ENCODE measurements at regions of chr21 and their contacts with region 1.

Region 1: DNA sequence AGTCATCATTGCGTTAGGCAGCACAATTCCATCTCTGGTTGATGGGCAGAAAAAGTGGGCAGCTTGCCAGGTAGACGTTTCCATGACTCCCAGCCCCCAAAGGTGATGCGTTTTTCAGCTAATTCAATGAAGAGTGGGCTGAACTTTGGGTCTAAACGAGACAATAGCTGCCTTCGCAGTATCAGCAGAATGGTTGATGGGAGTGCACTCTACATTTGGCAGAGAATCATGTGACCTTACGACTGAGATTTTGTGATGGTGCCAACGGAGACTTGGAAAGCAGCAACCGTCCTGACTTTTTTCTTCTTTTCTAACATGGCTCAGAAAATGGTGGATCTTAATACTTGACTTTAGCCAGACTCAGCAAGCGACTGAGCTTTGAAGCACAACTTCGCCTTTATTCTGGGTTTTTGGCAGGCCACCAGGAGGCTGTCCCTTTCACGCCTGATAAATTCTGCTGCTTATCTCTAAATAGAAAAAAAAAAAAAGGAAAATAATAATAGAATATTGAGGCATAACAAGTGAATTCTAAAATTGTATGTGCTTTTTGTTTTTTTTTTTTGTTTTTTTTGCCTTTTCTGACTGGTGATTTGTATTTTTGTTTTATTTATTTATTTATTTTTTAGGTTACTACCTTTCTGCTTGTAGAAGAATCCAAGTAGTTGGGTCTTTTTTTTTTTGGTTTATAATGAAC is 804.8 kb downstream of the USP25 start:
- DNase-seq: peak; percentile 29 to 88 (median 66)

Region 2: GRCh38 chr21:16071092-16071491 is 463.5 kb before region 1 on chr21:
- intact Hi-C with region 1: loop called (anchors 10 kb)
- DNase-seq: peak; percentile 69 to 97 (median 88)

Region 3: DNA sequence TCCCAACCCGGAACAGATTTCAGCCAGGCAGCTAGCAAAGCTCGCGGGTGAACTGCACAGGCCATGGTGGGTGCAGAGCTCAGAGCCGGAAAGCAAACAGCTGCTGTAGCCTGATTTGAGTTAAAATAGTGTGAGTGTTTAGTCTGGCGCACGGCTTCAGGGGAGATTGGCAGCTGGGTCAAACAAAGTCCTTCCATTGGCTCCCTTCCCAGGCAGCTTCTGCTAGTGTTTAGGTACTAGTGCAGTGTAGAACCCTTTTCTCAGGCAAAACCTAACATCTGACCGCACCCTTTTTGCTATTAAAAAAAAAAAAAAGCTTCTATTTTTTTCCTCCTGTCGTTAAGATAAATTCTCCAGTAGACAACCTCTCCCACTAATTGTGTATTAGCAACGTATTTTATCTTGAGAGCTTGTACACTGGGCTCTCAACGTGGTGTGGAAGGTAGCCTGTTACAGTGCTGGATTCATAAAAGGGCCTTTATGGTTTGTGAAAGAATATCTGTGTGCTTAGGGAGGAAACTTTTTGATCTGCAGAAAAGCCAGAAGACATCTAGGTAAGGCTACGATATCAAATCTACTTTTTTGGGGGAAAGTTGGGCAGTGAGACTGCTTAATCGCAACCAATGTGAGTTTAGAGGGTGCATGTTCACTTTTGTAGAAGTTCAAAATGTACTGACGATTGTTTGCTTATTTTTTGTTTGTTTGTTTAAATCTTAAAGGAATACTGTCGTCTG is 115.2 kb before region 1 on chr21:
- intact Hi-C with region 1: loop called (anchors 5 kb)
- DNase-seq: peak; percentile 14 to 84 (median 48)

Region 4: DNA sequence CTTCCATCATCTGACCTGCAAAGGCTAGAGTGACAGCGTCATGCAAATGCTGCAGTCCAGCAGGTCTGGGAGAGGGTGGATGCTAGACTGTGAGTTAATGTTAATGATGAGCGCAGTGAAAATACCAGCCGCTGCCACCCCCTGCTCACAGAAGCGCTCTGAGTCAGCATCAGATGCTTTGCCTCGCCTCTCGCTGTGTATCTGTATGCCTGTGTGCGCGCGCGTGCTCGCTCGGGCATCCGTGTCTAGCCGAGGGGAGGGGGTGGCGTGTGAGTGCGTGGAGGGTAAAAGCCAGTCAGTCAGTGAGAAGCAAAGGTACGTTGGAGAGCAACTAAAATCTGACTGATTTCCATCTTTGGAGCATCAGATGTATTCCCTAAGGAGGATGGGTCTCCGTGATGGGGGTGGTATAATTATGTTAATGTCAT is 53.9 kb after region 1 on chr21:
- intact Hi-C with region 1: loop called (anchors 10 kb)
- DNase-seq: peak; percentile 82 to 98 (median 93)